ENCODE measurements at regions of chr19 and their contacts with region 1.

Region 1: GRCh38 chr19:45770192-45771101 is 1.4 kb upstream of the SIX5 start:
- DNase-seq: peak; percentile 96
- ATAC-seq: peak; percentile 77
- H3K4me3 ChIP-seq: peak overlapping the region; percentile 69 to 83 (median 70)
- H3K27ac ChIP-seq: peak overlapping the region; percentile 85
- H3K4me1 ChIP-seq: peaks cover 27% of the 10 kb centered on the region
- H3K27me3 ChIP-seq: no peaks in the 10 kb centered on the region
- CTCF ChIP-seq: peak; percentile 94
- EP300 ChIP-seq: peak in 1 of 2 experiments; percentile 5; a peak in 1 of 4 replicates
- POLR2A ChIP-seq: peak; percentile 38 to 76
- RAD21 ChIP-seq: peak; percentile 88

Region 2: GRCh38 chr19:45506246-45506990 is 264.0 kb before region 1 on chr19:
- CTCF ChIA-PET with region 1: no interaction called
- POLR2A ChIA-PET with region 1: no interaction called
- in situ Hi-C with region 1: no loop called
- intact Hi-C with region 1: no loop called
- DNase-seq: peak; percentile 85
- ATAC-seq: peak; percentile 73
- H3K4me3 ChIP-seq: peak overlapping the region; percentile 92 to 100 (median 96)
- H3K27ac ChIP-seq: peak overlapping the region; percentile 77
- H3K4me1 ChIP-seq: peaks cover 45% of the 10 kb centered on the region
- H3K27me3 ChIP-seq: no peaks in the 10 kb centered on the region; a peak in 1 of 5 replicates
- CTCF ChIP-seq: peak; percentile 90
- EP300 ChIP-seq: peak in 1 of 2 experiments; percentile 33; a peak in 1 of 4 replicates
- POLR2A ChIP-seq: peak; percentile 55 to 82; a peak in 3 of 4 replicates
- RAD21 ChIP-seq: peak; percentile 46; the same call in 1 of the 2 replicates

Region 3: DNA sequence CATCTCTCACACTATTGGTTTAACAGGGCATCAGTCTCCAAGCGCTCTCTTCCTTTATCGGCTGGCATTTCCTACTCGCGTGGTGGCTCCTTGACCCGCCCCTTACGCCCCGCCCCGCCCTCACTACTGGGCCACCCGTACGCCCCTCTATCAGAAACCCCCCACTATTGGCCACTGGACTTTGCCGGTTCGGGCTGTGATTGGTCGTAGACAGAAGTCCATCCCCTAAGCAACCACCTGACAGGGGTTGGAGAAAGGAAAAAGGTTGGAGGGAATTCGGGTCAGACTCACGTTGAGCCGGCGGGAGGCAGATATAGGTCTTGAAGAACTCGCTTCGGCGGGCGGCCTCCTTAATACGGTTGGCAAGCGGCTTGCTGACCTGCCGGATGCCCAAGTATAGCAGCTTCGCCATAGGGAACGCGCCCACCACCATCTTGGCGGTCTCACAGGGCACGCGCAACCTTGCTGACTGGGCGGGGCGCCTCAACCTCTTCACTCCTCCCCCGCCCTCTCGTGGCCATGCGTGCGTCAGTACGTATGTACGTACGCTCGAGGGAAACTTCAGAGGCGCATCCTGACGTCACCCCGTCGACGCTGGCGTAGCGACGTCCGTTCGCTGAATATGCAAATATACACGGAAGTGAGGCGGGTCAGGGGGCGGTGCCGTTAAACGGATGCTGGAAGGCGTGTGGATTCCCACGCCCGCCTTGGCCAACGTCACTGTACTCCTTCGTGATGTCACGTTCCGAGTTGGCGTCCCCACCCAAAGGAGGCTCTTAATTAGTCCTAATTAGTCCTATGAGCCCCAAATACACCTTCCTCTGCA is 185.9 kb before region 1 on chr19 and contains the start of gene OPA3:
- CTCF ChIA-PET with region 1: no interaction called
- POLR2A ChIA-PET with region 1: interaction called, 11 read pairs
- in situ Hi-C with region 1: no loop called
- intact Hi-C with region 1: no loop called
- DNase-seq: peak; percentile 98
- ATAC-seq: peak; percentile 91
- H3K4me3 ChIP-seq: peak within 1 kb of the TSS; percentile 63 to 80 (median 74)
- H3K27ac ChIP-seq: peak within 1 kb of the TSS; percentile 100
- H3K4me1 ChIP-seq: peaks cover 52% of the 10 kb centered on the region
- H3K27me3 ChIP-seq: no peaks in the 10 kb centered on the region
- CTCF ChIP-seq: peak; percentile 25; the same call in 1 of the 2 replicates
- EP300 ChIP-seq: peak in 1 of 2 experiments; percentile 53; a peak in 1 of 4 replicates
- POLR2A ChIP-seq: peak; percentile 86 to 91
- RAD21 ChIP-seq: peak; percentile 29; the same call in 1 of the 2 replicates
- total RNA-seq, gene OPA3: 7.8 and 8.3 TPM in 2 replicates

Region 4: DNA sequence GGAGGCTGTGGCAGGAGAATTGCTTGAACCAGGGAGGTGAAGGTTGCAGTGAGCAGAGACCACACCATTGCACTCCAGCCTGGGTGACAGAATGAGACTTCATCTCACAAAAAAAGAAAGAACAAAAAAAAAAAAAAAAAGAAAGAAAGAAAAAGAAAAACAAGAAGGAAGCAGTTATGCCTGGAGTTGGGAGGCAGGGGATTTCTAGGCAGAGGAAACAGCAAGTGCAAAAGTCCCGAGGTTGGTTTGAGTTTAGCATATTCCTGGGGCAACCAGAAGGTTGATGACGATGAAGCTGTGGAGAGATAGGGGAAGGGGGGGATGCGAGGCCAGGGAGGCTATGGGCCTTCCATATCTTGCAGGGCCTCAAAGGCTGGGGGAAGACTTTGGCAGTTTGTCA is 119.7 kb before region 1 on chr19:
- CTCF ChIA-PET with region 1: no interaction called
- POLR2A ChIA-PET with region 1: no interaction called
- in situ Hi-C with region 1: no loop called
- intact Hi-C with region 1: no loop called
- DNase-seq: no peak
- ATAC-seq: no peak
- H3K4me3 ChIP-seq: no peak overlapping the region
- H3K27ac ChIP-seq: no peak overlapping the region
- H3K4me1 ChIP-seq: peaks cover 9% of the 10 kb centered on the region
- H3K27me3 ChIP-seq: peaks cover 0 to 3% of the 10 kb centered on the region in 2 experiments; a peak in 1 of 5 replicates
- CTCF ChIP-seq: no peak
- EP300 ChIP-seq: no peak
- POLR2A ChIP-seq: no peak
- RAD21 ChIP-seq: no peak

Region 5: DNA sequence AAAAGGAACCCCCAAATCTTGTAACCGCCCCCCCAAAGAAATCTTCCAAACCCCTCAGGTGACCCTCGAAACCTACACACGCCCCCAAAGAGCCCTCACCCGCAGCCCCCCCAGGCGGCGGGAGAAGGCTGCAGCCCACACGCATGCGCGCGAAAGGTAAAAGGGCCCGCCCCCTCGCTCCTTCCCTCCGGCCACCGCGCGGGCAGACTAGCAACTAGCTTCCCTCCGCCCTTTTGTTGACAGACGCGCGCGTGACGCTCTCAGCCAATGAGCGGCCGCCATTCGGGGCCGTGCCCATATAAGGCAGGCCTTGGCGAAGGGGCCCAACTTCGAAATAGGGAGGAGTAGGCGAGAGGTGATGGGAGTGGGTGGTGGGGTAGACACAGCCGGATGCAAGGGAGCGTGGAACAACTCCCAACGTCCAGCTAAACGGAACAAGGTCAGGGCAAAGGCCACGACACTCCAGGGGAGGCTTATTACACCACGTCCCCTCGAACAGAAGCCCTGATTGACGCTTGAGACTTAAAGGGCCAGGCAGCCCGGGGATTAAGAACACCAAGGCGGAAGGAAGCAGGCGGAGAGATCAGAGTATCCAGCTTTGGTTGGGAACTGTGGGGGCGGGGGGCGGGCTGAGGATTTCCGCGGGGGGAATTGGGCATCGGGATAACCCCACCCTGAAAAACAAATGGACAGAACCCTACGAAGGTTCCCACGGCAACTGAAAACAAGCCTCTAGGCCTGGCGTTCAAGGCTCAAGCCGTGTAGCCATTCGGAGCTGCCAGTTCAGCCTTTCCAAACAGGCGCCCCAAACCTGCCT is 53.1 kb before region 1 on chr19:
- CTCF ChIA-PET with region 1: no interaction called
- POLR2A ChIA-PET with region 1: interaction called, 94 read pairs
- in situ Hi-C with region 1: no loop called
- intact Hi-C with region 1: no loop called
- DNase-seq: peak; percentile 99
- ATAC-seq: peak; percentile 94
- H3K4me3 ChIP-seq: peak overlapping the region; percentile 71 to 79 (median 73)
- H3K27ac ChIP-seq: peak overlapping the region; percentile 91
- H3K4me1 ChIP-seq: peaks cover 65% of the 10 kb centered on the region
- H3K27me3 ChIP-seq: no peaks in the 10 kb centered on the region; a peak in 1 of 5 replicates
- CTCF ChIP-seq: peak; percentile 37
- EP300 ChIP-seq: peak in 1 of 2 experiments; percentile 66; a peak in 2 of 4 replicates
- POLR2A ChIP-seq: peak; percentile 41 to 60; a peak in 3 of 4 replicates
- RAD21 ChIP-seq: peak; percentile 8; the same call in 1 of the 2 replicates

Region 6: GRCh38 chr19:45753546-45753945 is 16.9 kb before region 1 on chr19:
- CTCF ChIA-PET with region 1: no interaction called
- POLR2A ChIA-PET with region 1: interaction called, 11 read pairs
- in situ Hi-C with region 1: no loop called
- intact Hi-C with region 1: no loop called
- DNase-seq: no peak
- ATAC-seq: peak; percentile 61
- H3K4me3 ChIP-seq: no peak overlapping the region
- H3K27ac ChIP-seq: no peak overlapping the region
- H3K4me1 ChIP-seq: peaks cover 20% of the 10 kb centered on the region
- H3K27me3 ChIP-seq: peaks cover 0 to 29% of the 10 kb centered on the region in 2 experiments; a peak in 2 of 5 replicates
- CTCF ChIP-seq: peak; percentile 50
- EP300 ChIP-seq: no peak
- POLR2A ChIP-seq: no peak
- RAD21 ChIP-seq: no peak

Region 7: DNA sequence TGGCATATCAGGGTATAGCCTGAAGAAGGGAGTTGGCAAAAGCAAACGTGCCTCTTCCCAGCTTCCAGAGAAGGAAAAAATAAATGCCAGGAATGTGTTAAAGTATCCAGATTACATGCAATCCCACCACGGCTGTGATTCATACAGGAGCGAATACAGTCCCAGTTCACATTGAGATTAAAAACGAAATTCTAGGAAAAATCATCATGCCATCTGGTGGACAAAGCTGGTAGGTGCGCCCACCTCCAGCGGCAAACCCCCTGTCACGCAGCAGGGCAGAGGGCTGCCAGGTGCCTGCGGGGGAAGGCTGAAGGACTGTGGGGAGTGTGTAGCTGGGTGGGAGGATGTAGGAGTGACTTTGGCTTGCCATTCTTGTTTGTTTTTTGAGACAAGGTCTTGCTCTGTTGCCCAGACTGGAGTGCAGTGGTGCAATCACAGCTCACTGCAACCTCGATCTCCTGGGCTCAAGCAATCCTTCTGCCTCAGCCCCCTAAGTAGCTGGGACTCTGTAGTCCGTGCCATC is 28.6 kb after region 1 on chr19:
- CTCF ChIA-PET with region 1: interaction called, 17 read pairs
- POLR2A ChIA-PET with region 1: interaction called, 15 read pairs
- in situ Hi-C with region 1: no loop called
- intact Hi-C with region 1: loop called (anchors 1 kb)
- DNase-seq: peak; percentile 31
- ATAC-seq: peak; percentile 77
- H3K4me3 ChIP-seq: 0 out of 6 replicates have a peak overlapping the region, but pooled peaks of 1 of the 3 experiments have one; percentile 33
- H3K27ac ChIP-seq: no peak overlapping the region
- H3K4me1 ChIP-seq: peaks cover 26% of the 10 kb centered on the region
- H3K27me3 ChIP-seq: peaks cover 1 to 19% of the 10 kb centered on the region in 2 experiments; a peak in 2 of 5 replicates
- CTCF ChIP-seq: peak; percentile 85
- EP300 ChIP-seq: no peak
- POLR2A ChIP-seq: no peak
- RAD21 ChIP-seq: peak; percentile 47

Region 8: GRCh38 chr19:45824041-45824471 is 53.6 kb after region 1 on chr19:
- CTCF ChIA-PET with region 1: no interaction called
- POLR2A ChIA-PET with region 1: no interaction called
- in situ Hi-C with region 1: no loop called
- intact Hi-C with region 1: no loop called
- DNase-seq: no peak
- ATAC-seq: no peak
- H3K4me3 ChIP-seq: no peak overlapping the region
- H3K27ac ChIP-seq: no peak overlapping the region
- H3K4me1 ChIP-seq: no peaks in the 10 kb centered on the region
- H3K27me3 ChIP-seq: no peaks in the 10 kb centered on the region
- CTCF ChIP-seq: no peak
- EP300 ChIP-seq: no peak
- POLR2A ChIP-seq: no peak
- RAD21 ChIP-seq: no peak

Region 9: GRCh38 chr19:45886427-45887199 is 116.2 kb after region 1 on chr19:
- CTCF ChIA-PET with region 1: no interaction called
- POLR2A ChIA-PET with region 1: interaction called, 11 read pairs
- in situ Hi-C with region 1: no loop called
- intact Hi-C with region 1: no loop called
- DNase-seq: peak; percentile 88
- ATAC-seq: peak; percentile 46
- H3K4me3 ChIP-seq: peak overlapping the region; percentile 69 to 91 (median 80)
- H3K27ac ChIP-seq: peak overlapping the region; percentile 78
- H3K4me1 ChIP-seq: peaks cover 30% of the 10 kb centered on the region
- H3K27me3 ChIP-seq: no peaks in the 10 kb centered on the region
- CTCF ChIP-seq: no peak
- EP300 ChIP-seq: no peak
- POLR2A ChIP-seq: peak in 1 of 2 experiments; percentile 61; a peak in 3 of 4 replicates
- RAD21 ChIP-seq: no peak